ENCODE measurements at regions of chr1 and their contacts with region 1.

Region 1: GRCh38 chr1:24391882-24392603 is 21.5 kb downstream of the STPG1 start:
- DNase-seq: peak; percentile 53 to 59
- H3K4me3 ChIP-seq: no peak overlapping the region
- H3K27ac ChIP-seq: peak overlapping the region; percentile 86 to 88
- H3K4me1 ChIP-seq: no peaks in the 10 kb centered on the region
- H3K27me3 ChIP-seq: no peaks in the 10 kb centered on the region
- CTCF ChIP-seq: peak; percentile 62 to 73 (median 66)
- POLR2A ChIP-seq: no peak

Region 2: GRCh38 chr1:24150234-24151174 is 241.5 kb before region 1 on chr1:
- intact Hi-C with region 1: no loop called
- DNase-seq: peak; percentile 81 to 83
- H3K4me3 ChIP-seq: no peak overlapping the region
- H3K27ac ChIP-seq: no peak overlapping the region
- H3K4me1 ChIP-seq: no peaks in the 10 kb centered on the region
- H3K27me3 ChIP-seq: no peaks in the 10 kb centered on the region
- CTCF ChIP-seq: peak; percentile 75 to 91 (median 80)
- POLR2A ChIP-seq: no peak

Region 3: DNA sequence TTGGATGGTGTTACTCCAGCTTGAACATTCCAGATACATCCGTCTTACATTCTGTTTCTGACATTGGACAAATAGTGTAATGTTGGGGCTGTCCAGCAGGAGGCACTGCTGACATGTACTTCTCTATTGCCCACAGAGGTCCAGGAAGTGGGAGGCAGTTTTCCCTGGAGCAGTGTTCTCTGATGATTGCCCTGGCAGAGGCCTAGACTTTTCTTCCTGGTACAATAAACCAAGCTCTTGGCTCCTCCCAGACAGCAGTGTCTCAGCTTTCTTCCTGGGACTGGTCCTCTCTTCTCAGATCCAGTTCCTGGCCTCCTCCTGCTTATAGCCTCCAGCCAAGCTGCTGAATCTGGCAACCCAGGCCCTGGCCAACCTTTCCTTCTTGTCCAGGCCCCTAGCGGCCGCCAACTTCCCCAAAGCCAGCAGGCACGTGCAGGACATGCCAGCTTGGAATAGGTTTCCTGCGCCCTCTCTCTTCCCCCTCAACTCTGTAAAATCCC is 190.1 kb before region 1 on chr1:
- intact Hi-C with region 1: loop called (anchors 2 kb)
- DNase-seq: peak; percentile 75 to 86
- H3K4me3 ChIP-seq: no peak overlapping the region
- H3K27ac ChIP-seq: peak overlapping the region; percentile 33 to 66
- H3K4me1 ChIP-seq: peaks cover 0 to 3% of the 10 kb centered on the region in 2 donors
- H3K27me3 ChIP-seq: no peaks in the 10 kb centered on the region
- CTCF ChIP-seq: peak; percentile 58 to 87 (median 76)
- POLR2A ChIP-seq: no peak

Measured in uterus (tissue), 4 donors.